Dendritic cell treated with granulocyte-macrophage colony-stimulating factor and Interleukin-4, amounts not matched to agents 40 ng/mL and 50 ng/mL, for 4 days (primary cell): ENCODE measurements at regions of chr5 and their contacts with region 1.

Region 1: GRCh38 chr5:31581498-31582099 is 49.5 kb downstream of the C5orf22 start:
- H3K4me3 Mint-ChIP-seq: no peak overlapping the region
- H3K27ac Mint-ChIP-seq: no peak overlapping the region
- H3K4me1 Mint-ChIP-seq: peaks cover 16% of the 10 kb centered on the region
- H3K27me3 Mint-ChIP-seq: no peaks in the 10 kb centered on the region

Region 2: DNA sequence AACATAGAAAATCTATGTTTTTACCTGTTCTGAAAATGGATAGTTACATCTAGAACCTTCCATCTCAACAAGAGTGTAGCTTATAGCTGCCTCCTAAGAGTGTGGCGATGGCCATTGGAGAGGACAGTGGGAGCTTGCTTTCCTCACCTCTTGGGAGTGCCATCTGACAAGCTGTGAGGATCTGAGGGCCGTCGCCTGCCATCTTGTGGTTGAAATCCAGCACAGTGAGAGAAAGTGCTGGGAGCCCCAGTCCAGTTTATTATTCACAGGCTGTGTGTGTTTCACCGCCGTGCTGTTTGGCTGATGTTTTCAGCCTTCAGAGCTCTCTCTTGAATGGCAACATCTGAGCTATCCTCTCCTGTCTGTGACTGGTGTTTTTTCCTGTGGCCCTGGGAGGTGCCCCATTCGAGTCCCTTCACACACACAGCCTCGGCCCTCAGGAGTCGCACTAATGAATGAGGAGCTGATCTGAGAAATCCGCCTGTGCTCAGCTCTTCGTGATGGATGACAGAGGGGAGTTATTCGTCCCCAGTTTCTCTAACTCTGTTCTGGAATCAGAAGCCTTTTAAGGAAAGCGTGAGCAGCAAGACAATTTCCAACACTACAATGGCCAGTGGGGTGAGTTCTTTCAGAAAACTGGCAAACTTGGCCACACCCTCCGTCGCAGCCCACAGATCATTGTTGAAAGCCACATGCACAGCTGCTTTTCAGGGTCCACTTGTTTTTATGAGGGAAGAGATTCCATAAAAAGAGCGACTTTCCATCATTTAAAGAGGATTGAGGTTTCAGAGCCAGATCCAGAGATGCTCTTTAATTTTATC is 227.7 kb after region 1 on chr5:
- intact Hi-C with region 1: loop called (anchors 1 kb)
- H3K4me3 Mint-ChIP-seq: no peak overlapping the region
- H3K27ac Mint-ChIP-seq: no peak overlapping the region
- H3K4me1 Mint-ChIP-seq: no peaks in the 10 kb centered on the region
- H3K27me3 Mint-ChIP-seq: no peaks in the 10 kb centered on the region

Region 3: DNA sequence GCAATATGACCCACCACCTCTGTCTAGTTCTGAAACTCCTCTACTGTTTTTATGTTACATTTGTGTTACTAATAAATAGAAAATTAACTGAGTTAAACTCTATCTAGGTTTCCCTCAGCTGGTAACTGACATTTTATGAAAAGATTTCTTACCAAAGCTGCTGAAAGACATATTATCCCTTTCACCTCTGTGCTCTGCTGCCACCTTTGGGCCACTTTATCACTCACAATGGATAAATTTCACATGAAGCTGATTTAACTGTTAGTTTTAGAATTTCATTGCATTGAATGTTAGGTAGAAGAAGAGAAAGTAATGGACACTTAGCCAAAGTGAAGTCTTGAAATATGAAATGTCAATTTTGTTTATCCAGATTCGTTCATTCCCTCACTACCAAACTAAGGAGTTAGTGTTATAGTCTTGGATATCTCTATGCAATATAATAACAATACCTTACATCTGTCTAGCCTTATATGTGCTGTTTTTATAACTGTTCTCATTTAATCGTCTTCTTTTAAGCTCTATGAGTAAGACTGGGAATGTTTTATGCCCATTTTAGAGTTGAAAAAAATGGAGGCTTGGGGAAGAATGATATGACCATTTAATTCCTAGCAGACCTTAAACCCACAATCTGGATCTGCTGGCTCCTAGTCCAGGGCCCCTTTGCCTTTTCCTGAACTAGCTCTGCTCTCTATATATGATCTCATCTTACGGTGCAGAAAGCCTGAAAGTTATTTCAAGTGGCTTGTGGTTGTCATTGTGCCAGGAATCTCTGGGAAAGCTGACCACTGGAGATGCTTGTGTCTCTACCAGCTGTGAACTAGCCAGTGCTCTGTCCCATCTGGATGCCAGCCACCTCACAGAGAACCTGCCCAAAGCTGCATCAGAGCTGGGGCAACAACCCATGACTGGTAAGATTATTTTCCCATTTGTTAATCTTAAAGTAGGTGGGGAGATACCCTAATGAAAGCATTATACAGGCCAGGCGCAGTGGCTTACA is 495.4 kb after region 1 on chr5:
- intact Hi-C with region 1: loop called (anchors 5 kb)
- H3K4me3 Mint-ChIP-seq: no peak overlapping the region
- H3K27ac Mint-ChIP-seq: no peak overlapping the region
- H3K4me1 Mint-ChIP-seq: no peaks in the 10 kb centered on the region
- H3K27me3 Mint-ChIP-seq: no peaks in the 10 kb centered on the region

Region 4: GRCh38 chr5:32092938-32093812 is 511.6 kb after region 1 on chr5:
- intact Hi-C with region 1: loop called (anchors 1 kb)
- H3K4me3 Mint-ChIP-seq: no peak overlapping the region
- H3K27ac Mint-ChIP-seq: no peak overlapping the region
- H3K4me1 Mint-ChIP-seq: peaks cover 4% of the 10 kb centered on the region
- H3K27me3 Mint-ChIP-seq: no peaks in the 10 kb centered on the region